Activated B cell treated with CpG ODN at 0.5 μM for 24 hours (primary cell): ENCODE measurements at regions of chr2 and their contacts with region 1.

Region 1: GRCh38 chr2:172465417-172466334 is 38.3 kb downstream of the ITGA6 start:
- DNase-seq: no peak
- ATAC-seq: peak; percentile 74
- H3K4me3 Mint-ChIP-seq: no peak overlapping the region
- H3K27ac Mint-ChIP-seq: no peak overlapping the region
- H3K4me1 Mint-ChIP-seq: peaks cover 49% of the 10 kb centered on the region
- H3K27me3 Mint-ChIP-seq: peaks cover 2% of the 10 kb centered on the region
- CTCF ChIP-seq: peak; percentile 83

Region 2: DNA sequence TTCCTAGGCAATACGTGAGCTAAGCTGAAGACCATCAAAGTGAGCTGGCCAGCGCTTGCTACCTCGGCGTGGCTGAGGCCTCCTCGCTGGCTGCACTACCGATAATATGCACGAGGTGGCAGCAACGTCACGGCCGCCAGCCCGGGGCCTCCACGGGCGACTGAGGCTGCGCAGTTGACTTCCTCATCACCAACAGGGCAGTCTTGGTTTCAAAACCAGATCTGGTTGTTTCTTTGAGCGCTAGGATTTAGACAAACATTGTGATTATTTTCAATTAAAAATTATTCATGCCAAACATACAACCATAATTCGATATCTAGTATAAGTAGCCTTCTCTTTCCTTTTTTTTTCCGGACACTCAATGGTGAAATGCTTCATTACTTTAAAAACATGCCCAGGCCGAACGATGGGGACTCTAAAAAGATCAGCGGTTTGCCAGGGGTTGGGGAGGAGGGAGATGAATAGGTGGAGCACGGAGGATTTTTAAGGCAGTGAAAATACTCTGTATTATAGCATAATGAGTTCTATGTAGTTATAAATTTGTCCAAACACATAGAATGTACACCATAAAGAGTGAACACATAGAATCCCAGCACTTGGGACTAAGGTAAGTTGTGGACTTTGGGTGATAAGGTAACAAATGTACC is 891.4 kb before region 1 on chr2:
- CTCF ChIA-PET with region 1: interaction called, 11 read pairs
- POLR2A ChIA-PET with region 1: no interaction called
- intact Hi-C with region 1: loop called (anchors 1 kb)
- DNase-seq: peak; percentile 81
- ATAC-seq: peak; percentile 100
- H3K4me3 Mint-ChIP-seq: no peak overlapping the region
- H3K27ac Mint-ChIP-seq: peak overlapping the region; percentile 16
- H3K4me1 Mint-ChIP-seq: peaks cover 5% of the 10 kb centered on the region
- H3K27me3 Mint-ChIP-seq: no peaks in the 10 kb centered on the region
- CTCF ChIP-seq: peak; percentile 76

Region 3: DNA sequence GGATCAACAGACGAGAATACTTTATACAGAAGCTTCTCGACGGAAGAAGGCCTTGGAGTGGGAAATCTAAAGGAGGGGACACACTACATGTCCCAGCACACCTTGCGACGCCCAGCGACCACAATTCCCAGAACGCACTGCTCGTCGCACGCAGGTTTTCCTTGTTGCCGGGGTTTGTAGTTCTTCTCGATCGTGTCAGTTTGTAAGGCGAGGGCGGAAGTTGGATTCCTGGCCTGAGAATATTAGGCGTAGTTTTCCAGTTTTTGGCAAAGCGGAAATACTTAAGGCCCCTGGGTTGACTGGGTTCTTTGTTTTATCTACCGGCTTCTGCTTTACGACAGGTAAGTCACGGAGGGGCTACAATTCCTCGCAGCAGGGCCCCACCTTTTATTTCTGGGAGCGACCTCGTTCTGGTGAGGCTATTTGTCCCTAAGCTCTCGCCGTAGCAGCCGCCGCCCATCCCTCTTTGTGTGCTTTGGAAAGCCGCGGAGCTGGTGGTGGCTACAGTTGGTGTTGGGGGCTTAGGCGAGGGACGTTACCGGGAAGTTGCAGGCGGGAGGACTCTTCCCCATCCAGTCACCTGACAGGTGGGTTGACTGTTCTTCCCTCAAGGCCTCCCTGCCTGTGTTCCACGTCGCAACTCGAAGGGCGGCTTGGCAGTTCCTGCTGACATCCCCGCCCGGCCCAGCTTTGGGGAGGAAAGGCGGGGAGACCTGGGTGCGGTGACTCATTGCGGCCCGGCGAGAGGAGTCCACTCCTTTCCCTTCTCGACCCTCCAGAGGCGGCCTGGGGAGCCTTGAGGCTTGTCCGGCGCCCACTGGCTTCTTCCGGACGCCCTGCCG is 778.2 kb before region 1 on chr2 and contains the start of gene DYNC1I2:
- CTCF ChIA-PET with region 1: no interaction called
- POLR2A ChIA-PET with region 1: no interaction called
- intact Hi-C with region 1: loop called (anchors 5 kb)
- DNase-seq: peak; percentile 70
- ATAC-seq: peak; percentile 87
- H3K4me3 Mint-ChIP-seq: peak within 1 kb of the TSS; percentile 95
- H3K27ac Mint-ChIP-seq: peak within 1 kb of the TSS; percentile 88
- H3K4me1 Mint-ChIP-seq: peaks cover 17% of the 10 kb centered on the region
- H3K27me3 Mint-ChIP-seq: peaks cover 2% of the 10 kb centered on the region
- CTCF ChIP-seq: no peak
- total RNA-seq, gene DYNC1I2: 52.0 and 54.6 TPM in 2 replicates

Region 4: DNA sequence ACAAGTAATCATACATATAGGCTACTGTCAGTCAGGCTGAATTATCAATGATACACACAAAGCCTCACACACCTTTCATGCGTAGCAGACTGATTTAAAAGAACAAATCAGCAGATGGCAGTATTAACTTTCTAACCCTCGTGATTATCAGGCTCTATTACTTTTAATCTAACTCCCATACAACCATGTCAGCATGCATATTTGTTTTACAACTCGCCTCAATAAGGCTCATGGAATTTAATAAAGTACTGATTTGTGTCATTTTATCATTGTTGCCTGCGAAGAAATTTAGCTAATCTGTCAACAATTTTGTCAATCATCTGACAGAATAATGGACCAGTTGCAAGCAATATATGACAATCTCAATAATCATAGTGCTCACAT is 654.4 kb before region 1 on chr2:
- CTCF ChIA-PET with region 1: no interaction called
- POLR2A ChIA-PET with region 1: no interaction called
- intact Hi-C with region 1: loop called (anchors 1 kb)
- DNase-seq: no peak
- ATAC-seq: no peak
- H3K4me3 Mint-ChIP-seq: no peak overlapping the region
- H3K27ac Mint-ChIP-seq: no peak overlapping the region
- H3K4me1 Mint-ChIP-seq: no peaks in the 10 kb centered on the region
- H3K27me3 Mint-ChIP-seq: no peaks in the 10 kb centered on the region
- CTCF ChIP-seq: no peak

Region 5: DNA sequence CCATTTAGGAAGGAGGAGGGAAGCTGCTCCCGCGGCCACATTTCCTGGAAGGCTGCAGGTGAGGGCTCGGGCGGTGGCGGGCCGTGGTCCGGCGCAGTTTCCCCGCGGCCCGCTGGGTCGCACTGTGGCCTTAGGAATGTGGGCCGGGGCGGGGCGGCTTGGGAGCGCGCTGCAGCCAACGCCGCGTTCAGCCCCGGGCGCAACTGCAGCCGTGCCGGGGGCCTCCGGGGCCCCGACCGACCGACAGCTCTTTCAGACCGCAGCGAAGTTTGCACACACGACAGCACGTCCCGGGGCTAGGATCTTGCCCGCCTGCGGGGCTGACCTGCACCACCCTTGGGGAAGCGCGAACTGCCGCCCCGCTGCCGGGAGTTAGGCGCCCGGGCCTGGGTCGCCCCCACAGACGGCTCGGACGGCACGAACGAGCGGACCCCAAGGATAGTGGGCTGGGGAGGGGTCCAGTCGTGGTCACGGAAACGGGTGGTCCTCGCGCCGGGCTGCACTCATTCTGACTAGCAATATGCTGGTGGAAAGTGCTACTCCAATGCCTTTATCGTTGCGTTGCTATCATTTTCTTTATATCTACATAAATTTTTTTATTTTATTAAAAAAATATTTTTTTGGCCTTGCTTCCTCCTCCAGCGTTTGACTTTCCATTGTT is 293.0 kb before region 1 on chr2:
- CTCF ChIA-PET with region 1: interaction called, 6 read pairs
- POLR2A ChIA-PET with region 1: no interaction called
- intact Hi-C with region 1: loop called (anchors 1 kb)
- DNase-seq: no peak
- ATAC-seq: peak; percentile 45
- H3K4me3 Mint-ChIP-seq: peak overlapping the region; percentile 28
- H3K27ac Mint-ChIP-seq: no peak overlapping the region
- H3K4me1 Mint-ChIP-seq: peaks cover 4% of the 10 kb centered on the region
- H3K27me3 Mint-ChIP-seq: peaks cover 23% of the 10 kb centered on the region
- CTCF ChIP-seq: no peak

Region 6: GRCh38 chr2:172442072-172442895 is 23.4 kb before region 1 on chr2:
- CTCF ChIA-PET with region 1: interaction called, 23 read pairs
- POLR2A ChIA-PET with region 1: no interaction called
- intact Hi-C with region 1: no loop called
- DNase-seq: no peak
- ATAC-seq: no peak
- H3K4me3 Mint-ChIP-seq: no peak overlapping the region
- H3K27ac Mint-ChIP-seq: no peak overlapping the region
- H3K4me1 Mint-ChIP-seq: peaks cover 2% of the 10 kb centered on the region
- H3K27me3 Mint-ChIP-seq: peaks cover 23% of the 10 kb centered on the region
- CTCF ChIP-seq: no peak